Astrocyte of the cerebellum (primary cell): ENCODE measurements at regions of chr9 and their contacts with region 1.

Region 1: DNA sequence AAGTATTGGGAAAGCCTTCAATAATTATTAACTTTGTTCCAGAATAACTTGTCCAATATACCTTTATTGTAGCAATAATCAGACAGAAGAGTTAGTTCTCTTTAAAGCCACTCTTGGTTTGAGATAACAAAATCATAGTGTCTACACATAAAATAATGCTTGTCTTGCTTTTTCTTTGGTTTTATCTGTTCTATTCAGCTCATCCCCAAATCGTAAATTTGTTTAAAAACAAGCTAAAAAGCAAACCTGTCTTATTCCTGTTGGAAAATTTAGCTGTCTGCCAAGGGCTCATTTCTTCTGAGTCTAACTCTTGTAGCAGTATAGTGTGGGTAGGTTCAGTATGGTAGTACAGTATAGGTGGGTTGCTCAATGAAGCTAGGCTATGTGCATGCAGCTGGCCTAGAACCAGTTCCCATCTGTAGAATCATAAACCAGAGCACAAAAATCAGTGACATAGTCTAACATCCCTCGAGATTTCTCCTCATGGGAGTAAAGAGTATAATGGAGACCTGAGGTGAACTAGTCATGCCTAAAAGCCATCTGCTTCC is 17.9 kb upstream of the APBA1 start:
- DNase-seq: no peak
- H3K4me3 ChIP-seq: no peak overlapping the region
- CTCF ChIP-seq: no peak

Region 2: GRCh38 chr9:69719983-69720382 is 29.9 kb after region 1 on chr9:
- in situ Hi-C with region 1: no loop called
- DNase-seq: no peak
- H3K4me3 ChIP-seq: no peak overlapping the region
- CTCF ChIP-seq: no peak

Region 3: GRCh38 chr9:69745716-69746437 is 55.8 kb after region 1 on chr9:
- in situ Hi-C with region 1: no loop called
- DNase-seq: no peak
- H3K4me3 ChIP-seq: no peak overlapping the region
- CTCF ChIP-seq: peak; percentile 44

Region 4: DNA sequence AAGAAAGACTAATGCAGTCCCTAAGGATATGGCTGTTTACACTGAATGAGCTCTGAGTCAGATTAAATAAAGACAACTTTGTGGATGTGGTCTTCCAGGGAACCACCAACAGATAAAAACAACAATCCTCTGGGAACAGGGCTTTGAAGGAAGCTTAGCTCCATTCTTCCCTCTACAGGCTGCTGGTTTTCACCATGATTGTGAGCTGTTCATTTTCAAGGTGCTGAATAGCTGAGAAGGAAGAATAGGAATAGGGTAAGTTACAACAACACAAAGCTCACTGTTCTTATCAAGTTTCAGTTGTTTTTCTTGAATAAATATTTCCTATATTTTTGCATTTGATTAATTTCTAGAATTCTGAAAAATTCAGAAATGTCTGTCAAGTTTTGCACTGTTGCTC is 95.7 kb after region 1 on chr9:
- in situ Hi-C with region 1: loop called (anchors 5 kb)
- DNase-seq: peak; percentile 57
- H3K4me3 ChIP-seq: no peak overlapping the region
- CTCF ChIP-seq: peak; percentile 54